Activated naive CD8-positive, alpha-beta T cell treated with anti-CD3 and anti-CD28 coated beads, Interleukin-2, amount 10 ng/mL, durations not matched to agents 7 days and 5 days (primary cell): ENCODE measurements at regions of chr22 and their contacts with region 1.

Region 1: DNA sequence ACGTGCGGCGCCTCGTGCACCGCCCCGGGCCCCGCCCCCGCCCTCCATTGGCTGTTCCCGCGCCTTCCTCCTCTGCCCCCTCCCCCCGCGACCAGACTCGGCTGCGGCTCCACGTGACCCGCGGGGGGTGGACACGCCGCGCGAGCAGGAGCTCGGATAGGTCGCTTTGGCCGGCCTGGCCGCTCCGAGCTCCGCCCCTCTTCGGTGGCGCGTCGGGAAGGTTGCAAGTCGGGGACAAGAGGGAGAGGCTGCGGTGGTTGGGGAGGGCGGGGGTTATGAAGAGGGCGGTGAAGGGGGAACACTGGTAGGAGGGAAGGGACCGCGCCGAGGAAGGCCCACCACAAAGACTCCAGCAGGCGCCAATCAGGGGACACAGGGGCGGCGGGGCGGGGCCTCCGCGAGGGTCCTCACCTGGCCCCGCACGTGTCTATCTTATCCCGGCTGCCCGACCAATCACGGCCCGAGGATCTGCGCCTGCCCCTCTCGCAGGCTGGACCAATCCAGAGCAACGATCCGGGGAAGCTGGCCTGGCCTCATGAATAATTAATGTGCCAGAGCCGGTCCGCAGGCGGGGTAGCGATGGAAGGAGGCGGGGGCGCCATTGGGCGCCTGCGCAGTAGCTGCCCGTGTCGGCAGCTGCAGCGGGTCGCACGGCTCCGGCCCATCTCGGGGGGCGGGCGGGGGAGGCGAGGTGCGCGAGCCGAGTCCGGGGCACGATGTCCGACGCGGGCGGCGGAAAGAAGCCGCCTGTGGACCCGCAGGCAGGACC is at the start of gene TEF:
- DNase-seq: peak; percentile 98
- ATAC-seq: peak; percentile 94
- H3K4me3 Mint-ChIP-seq: peak within 1 kb of the TSS; percentile 89
- H3K27ac Mint-ChIP-seq: peak within 1 kb of the TSS; percentile 96
- H3K4me1 Mint-ChIP-seq: peaks cover 5% of the 10 kb centered on the region
- H3K27me3 Mint-ChIP-seq: peaks cover 4% of the 10 kb centered on the region
- total RNA-seq, gene TEF: 3.6 to 4.0 TPM

Region 2: DNA sequence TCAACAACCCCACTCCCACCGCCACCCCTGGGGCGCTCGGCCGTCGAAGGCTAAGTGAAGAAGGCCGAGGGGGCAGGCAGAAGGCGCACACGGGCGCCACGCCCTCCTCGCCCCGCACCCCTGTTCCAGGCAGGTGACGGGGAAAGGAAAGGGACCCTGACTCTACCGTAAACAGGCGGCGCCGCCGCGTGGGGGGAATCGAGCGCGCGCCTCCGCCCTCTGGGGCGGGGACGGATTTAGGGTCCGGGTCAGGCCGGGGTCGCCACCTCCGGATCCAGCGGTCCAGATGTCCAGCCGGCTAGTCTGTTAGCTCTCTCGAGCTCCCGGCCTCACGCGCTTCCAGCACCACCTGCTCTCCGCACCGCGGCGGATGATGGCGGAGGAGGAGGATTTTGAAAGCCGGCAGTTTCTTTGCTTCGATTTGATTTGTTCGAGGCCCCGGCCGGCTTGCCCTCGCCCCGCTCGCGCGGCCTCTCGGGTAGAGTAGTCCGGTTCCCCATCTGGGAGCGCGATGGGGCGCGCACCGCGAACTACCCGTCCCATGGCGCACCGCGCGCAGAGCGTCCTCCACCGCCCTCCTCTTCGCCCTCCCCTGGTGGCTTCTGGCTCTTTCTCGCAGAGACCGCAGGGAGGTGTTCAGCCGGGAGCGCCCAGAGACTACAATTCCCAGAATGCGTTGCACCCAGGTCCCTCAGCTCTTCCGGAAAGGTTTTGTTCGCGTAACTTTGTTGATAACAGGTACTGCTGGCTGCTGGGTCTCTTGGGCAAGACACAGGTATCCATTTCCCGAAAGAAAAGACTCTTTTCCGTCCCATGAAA is 95.5 kb before region 1 on chr22 and contains the start of gene RANGAP1:
- POLR2A ChIA-PET with region 1: interaction called, 15 read pairs
- DNase-seq: peak; percentile 96
- ATAC-seq: peak; percentile 96
- H3K4me3 Mint-ChIP-seq: peak within 1 kb of the TSS; percentile 95
- H3K27ac Mint-ChIP-seq: peak within 1 kb of the TSS; percentile 96
- H3K4me1 Mint-ChIP-seq: peaks cover 18% of the 10 kb centered on the region
- H3K27me3 Mint-ChIP-seq: no peaks in the 10 kb centered on the region
- total RNA-seq, gene RANGAP1: 93.6 to 98.3 TPM

Region 3: GRCh38 chr22:41341990-41342389 is 39.5 kb before region 1 on chr22:
- POLR2A ChIA-PET with region 1: no interaction called
- DNase-seq: no peak
- ATAC-seq: peak; percentile 72
- H3K4me3 Mint-ChIP-seq: no peak overlapping the region
- H3K27ac Mint-ChIP-seq: no peak overlapping the region
- H3K4me1 Mint-ChIP-seq: peaks cover 4% of the 10 kb centered on the region
- H3K27me3 Mint-ChIP-seq: no peaks in the 10 kb centered on the region

Region 4: DNA sequence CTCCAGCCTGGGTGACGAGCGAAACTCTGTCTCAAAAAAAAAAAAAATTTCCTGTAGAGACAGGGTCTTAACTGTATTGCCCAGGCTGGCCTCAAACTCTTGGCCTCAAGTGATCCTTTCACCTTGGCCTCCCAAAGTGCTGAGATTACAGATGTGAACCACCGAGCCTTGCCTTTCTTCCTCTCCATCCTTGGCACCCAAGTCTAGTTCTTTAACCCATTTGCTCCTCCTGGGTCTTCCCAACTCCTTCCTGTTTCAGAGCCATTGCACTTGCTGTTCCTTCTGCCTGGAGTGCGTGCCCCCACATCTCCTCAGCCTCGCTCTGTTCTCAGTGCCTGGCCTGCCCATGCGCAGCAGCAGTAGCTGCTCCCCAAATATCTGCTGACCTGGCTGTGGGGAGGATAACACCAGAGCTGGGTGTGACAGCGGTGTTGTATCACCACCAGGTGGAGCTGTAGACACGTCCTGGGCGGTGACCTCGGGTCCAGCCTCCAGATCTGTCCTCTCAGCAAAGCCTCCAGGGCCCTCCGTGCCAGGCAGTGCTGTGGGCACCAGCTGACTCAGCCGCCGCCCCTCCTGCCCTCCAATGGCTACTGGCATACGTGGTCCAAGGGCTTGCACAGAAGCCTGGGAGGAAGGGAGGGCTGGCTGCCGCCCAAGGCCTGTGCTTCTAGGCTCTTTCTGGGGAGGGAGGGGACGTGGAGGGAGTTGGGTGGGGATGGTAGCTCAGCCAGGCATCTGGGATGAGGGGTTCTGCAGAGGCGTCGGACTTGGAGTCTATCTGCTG is 22.2 kb after region 1 on chr22:
- POLR2A ChIA-PET with region 1: no interaction called
- DNase-seq: peak; percentile 81
- ATAC-seq: peak; percentile 99
- H3K4me3 Mint-ChIP-seq: peak overlapping the region; percentile 49
- H3K27ac Mint-ChIP-seq: peak overlapping the region; percentile 70
- H3K4me1 Mint-ChIP-seq: peaks cover 5% of the 10 kb centered on the region
- H3K27me3 Mint-ChIP-seq: no peaks in the 10 kb centered on the region